ENCODE measurements at regions of chr6 and their contacts with region 1.

Region 1: GRCh38 chr6:18515767-18516166 is 128.6 kb downstream of the RNF144B start:
- DNase-seq: no peak
- H3K4me3 Mint-ChIP-seq: no peak overlapping the region
- H3K27ac Mint-ChIP-seq: no peak overlapping the region
- H3K4me1 Mint-ChIP-seq: peaks cover 10% of the 10 kb centered on the region
- H3K27me3 Mint-ChIP-seq: peaks cover 12% of the 10 kb centered on the region

Region 2: GRCh38 chr6:18485660-18486435 is 29.9 kb before region 1 on chr6:
- CTCF ChIA-PET with region 1: no interaction called
- POLR2A ChIA-PET with region 1: no interaction called
- intact Hi-C with region 1: loop called (anchors 1 kb)
- DNase-seq: no peak
- H3K4me3 Mint-ChIP-seq: no peak overlapping the region
- H3K27ac Mint-ChIP-seq: no peak overlapping the region
- H3K4me1 Mint-ChIP-seq: peaks cover 11% of the 10 kb centered on the region
- H3K27me3 Mint-ChIP-seq: peaks cover 34% of the 10 kb centered on the region

Region 3: GRCh38 chr6:18561037-18561750 is 45.4 kb after region 1 on chr6:
- CTCF ChIA-PET with region 1: no interaction called
- POLR2A ChIA-PET with region 1: no interaction called
- intact Hi-C with region 1: no loop called
- DNase-seq: no peak
- H3K4me3 Mint-ChIP-seq: no peak overlapping the region
- H3K27ac Mint-ChIP-seq: no peak overlapping the region
- H3K4me1 Mint-ChIP-seq: no peaks in the 10 kb centered on the region
- H3K27me3 Mint-ChIP-seq: peaks cover 4% of the 10 kb centered on the region